ENCODE measurements at regions of chr11 and their contacts with region 1.

Region 1: GRCh38 chr11:64358907-64359711 is at the start of gene RPS6KA4:
- DNase-seq: peak; percentile 78
- H3K4me3 Mint-ChIP-seq: peak within 1 kb of the TSS; percentile 80
- H3K27ac Mint-ChIP-seq: peak within 1 kb of the TSS; percentile 36
- H3K4me1 Mint-ChIP-seq: peaks cover 35% of the 10 kb centered on the region
- H3K27me3 Mint-ChIP-seq: no peaks in the 10 kb centered on the region
- CTCF ChIP-seq: no peak
- total RNA-seq, gene RPS6KA4: 46.0 and 56.5 TPM in 2 replicates

Region 2: GRCh38 chr11:63719977-63720376 is 639.1 kb before region 1 on chr11:
- CTCF ChIA-PET with region 1: no interaction called
- intact Hi-C with region 1: no loop called
- DNase-seq: no peak
- H3K4me3 Mint-ChIP-seq: no peak overlapping the region
- H3K27ac Mint-ChIP-seq: no peak overlapping the region
- H3K4me1 Mint-ChIP-seq: no peaks in the 10 kb centered on the region
- H3K27me3 Mint-ChIP-seq: no peaks in the 10 kb centered on the region
- CTCF ChIP-seq: no peak

Region 3: GRCh38 chr11:64269380-64270234 is 89.5 kb before region 1 on chr11:
- CTCF ChIA-PET with region 1: interaction called, 10 read pairs
- intact Hi-C with region 1: no loop called
- DNase-seq: peak; percentile 97
- H3K4me3 Mint-ChIP-seq: peak overlapping the region; percentile 94
- H3K27ac Mint-ChIP-seq: peak overlapping the region; percentile 97
- H3K4me1 Mint-ChIP-seq: peaks cover 18% of the 10 kb centered on the region
- H3K27me3 Mint-ChIP-seq: no peaks in the 10 kb centered on the region
- CTCF ChIP-seq: no peak

Region 4: DNA sequence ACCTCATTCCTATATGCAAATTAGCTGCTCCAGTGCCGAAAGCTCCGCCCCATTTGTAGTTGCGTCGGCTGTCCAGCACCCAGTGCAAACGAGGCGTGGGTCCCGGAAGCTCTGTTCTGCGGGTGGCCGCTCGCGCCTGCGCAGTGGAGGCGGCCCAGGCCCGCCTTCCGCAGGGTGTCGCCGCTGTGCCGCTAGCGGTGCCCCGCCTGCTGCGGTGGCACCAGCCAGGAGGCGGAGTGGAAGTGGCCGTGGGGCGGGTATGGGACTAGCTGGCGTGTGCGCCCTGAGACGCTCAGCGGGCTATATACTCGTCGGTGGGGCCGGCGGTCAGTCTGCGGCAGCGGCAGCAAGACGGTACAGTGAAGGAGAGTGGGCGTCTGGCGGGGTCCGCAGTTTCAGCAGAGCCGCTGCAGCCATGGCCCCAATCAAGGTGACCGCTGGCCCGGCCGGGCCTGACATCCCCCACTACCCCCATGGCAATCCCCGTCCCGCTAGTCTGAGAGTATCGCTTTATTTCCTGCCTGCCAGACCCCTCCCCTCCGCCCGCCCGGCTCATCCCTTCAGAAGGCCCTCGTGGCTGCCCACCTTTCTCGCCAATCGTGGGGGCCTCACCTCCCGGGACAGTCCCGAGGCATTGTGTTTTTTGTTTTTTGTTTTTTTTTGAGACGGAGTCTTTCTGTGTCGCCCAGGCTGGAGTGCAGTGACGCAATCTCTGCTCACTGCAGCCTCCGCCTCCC is 41.0 kb before region 1 on chr11 and contains the start of gene PRDX5:
- CTCF ChIA-PET with region 1: interaction called, 168 read pairs
- intact Hi-C with region 1: loop called (anchors 1 kb)
- DNase-seq: peak; percentile 97
- H3K4me3 Mint-ChIP-seq: peak within 1 kb of the TSS; percentile 98
- H3K27ac Mint-ChIP-seq: peak within 1 kb of the TSS; percentile 99
- H3K4me1 Mint-ChIP-seq: peaks cover 29% of the 10 kb centered on the region
- H3K27me3 Mint-ChIP-seq: no peaks in the 10 kb centered on the region
- CTCF ChIP-seq: no peak
- total RNA-seq, gene PRDX5: 165 TPM in 2 replicates

Region 5: DNA sequence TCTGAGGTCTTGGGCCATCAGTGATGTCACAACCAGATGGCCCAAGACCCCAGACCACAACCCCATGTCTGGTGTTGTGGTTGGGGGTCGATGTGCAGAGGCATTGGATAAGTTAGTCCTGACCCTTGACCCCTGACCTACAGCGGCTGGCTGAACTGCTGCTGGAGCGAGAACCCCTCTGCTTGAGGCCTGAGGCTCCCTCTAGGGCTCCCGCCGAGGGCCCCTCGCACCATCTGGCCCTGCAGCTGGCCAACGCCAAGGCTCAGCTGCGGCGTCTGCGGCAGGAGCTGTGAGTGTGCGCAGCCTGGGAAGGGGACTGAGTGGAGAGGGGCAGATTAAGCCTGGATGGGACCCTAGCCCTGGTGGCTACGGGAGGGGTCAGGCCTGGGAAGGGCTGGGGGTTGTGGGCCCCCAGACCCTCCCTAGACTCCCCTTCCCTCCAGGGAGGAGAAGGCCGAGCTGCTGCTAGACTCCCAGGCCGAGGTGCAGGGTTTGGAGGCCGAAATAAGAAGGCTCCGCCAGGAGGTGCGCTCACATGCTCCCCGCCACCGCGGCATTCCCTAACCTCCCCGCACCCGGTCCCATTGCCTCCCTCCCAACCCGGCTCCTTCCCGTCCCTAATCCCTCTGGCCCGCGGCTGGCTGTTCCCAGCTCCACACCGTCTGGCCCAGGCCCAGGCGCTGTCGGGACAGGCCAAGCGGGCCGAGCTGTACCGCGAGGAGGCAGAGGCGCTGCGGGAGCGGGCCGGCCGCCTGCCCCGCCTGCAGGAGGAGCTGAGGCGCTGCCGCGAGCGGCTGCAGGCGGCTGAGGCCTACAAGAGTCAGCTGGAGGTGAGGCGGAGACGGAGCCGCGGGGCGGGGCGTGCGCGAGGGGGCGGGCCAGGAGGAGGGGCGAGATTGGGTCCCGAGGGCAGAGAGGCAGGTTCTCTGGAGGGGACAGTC is 17.0 kb before region 1 on chr11:
- CTCF ChIA-PET with region 1: interaction called, 22 read pairs
- intact Hi-C with region 1: no loop called
- DNase-seq: peak; percentile 96
- H3K4me3 Mint-ChIP-seq: peak overlapping the region; percentile 52
- H3K27ac Mint-ChIP-seq: no peak overlapping the region
- H3K4me1 Mint-ChIP-seq: peaks cover 3% of the 10 kb centered on the region
- H3K27me3 Mint-ChIP-seq: no peaks in the 10 kb centered on the region
- CTCF ChIP-seq: peak; percentile 36

Region 6: DNA sequence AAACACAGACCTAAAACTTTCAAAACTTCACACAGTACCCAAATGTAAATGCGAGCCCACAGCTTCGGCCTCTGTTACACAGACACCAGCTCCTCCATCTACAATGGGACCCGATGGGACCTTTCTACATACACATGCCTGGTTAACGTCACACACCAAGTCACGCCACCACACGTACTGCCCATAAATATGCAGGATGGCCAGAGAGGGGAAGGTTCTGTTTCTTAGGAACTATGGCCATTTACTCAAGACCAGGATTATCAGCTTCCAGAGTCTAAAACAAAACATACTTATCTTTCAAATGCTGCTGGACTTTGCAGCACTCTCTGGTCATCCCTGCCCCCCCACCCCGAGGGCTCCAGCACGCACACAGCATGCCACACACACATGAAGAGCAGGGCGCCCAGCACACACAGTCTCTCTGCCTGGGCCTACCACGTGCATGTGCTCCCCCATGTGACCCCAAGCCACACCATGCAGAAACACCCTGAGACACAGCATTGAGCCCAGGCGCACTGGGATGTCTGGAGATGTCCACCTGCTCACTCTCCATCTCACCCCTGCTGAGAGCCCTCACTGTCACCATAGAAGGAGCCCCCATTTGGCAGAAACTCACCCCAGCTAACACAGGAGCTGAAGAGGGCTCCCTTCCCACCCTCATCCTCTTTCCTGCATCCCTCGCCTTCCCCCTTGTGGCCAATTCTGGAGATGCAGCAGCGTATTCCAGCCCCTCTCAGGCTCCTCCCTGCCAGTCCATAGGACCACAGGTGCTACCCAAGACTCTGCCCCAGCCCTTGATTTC is 293.7 kb after region 1 on chr11:
- CTCF ChIA-PET with region 1: interaction called, 8 read pairs
- intact Hi-C with region 1: loop called (anchors 5 kb)
- DNase-seq: peak; percentile 89
- H3K4me3 Mint-ChIP-seq: no peak overlapping the region
- H3K27ac Mint-ChIP-seq: no peak overlapping the region
- H3K4me1 Mint-ChIP-seq: no peaks in the 10 kb centered on the region
- H3K27me3 Mint-ChIP-seq: peaks cover 88% of the 10 kb centered on the region
- CTCF ChIP-seq: peak; percentile 80

Measured in Calu3 (cell line).